ENCODE measurements at regions of chr16 and their contacts with region 1.

Region 1: DNA sequence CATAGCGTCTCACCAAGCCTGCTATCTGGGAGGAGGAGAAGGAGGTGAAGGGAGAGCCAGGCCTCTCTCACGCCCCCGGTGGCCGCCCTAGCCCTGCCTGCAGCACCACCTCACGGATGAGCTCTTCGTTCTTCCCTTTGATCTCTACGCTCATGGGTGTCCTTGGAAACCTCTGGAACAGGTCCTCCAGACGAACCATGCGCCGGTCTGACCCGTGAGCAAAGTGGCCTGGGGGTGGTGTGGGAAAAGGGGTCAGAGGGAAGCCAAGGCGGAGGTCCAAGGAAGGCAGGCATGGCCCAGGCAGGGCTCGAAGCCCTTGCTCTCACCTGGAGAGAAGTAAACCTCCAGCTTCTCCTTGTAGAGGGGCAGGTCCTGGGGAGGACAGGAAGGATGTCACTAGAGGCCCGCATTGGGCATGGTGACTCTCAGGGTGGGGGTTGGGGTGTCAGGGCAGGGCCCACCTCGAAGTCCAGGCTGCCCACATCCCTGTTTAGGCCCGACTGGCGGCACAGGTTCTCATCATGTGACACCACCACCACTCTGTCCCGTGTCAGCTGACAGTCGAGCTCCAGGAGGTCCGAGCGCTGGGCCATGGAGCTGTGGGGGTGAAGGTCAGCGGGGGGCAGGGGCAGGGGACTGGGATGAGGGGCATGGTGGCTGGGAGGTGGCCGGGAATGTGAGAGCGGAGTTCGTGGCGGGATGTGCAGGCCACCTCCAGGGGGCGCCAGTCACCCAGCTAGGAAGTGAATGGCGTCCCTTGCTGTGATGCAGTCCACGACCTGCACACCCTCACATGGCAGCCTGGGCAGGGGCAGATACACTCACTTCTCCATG is 923 bp downstream of the GDPD3 start:
- H3K4me3 ChIP-seq: no peak overlapping the region
- H3K27ac ChIP-seq: no peak overlapping the region
- H3K4me1 ChIP-seq: no peaks in the 10 kb centered on the region
- CTCF ChIP-seq: peak; percentile 84

Region 2: GRCh38 chr16:29961479-29962343 is 150.7 kb before region 1 on chr16 and contains the start of gene TMEM219:
- CTCF ChIA-PET with region 1: no interaction called
- POLR2A ChIA-PET with region 1: no interaction called
- H3K4me3 ChIP-seq: peak within 1 kb of the TSS; percentile 57
- H3K27ac ChIP-seq: peak within 1 kb of the TSS; percentile 44; the same call in 1 of the 2 replicates
- H3K4me1 ChIP-seq: 0 out of 2 replicates have a peak, but pooled peaks cover 3% of the 10 kb centered on the region
- CTCF ChIP-seq: peak; percentile 94

Region 3: DNA sequence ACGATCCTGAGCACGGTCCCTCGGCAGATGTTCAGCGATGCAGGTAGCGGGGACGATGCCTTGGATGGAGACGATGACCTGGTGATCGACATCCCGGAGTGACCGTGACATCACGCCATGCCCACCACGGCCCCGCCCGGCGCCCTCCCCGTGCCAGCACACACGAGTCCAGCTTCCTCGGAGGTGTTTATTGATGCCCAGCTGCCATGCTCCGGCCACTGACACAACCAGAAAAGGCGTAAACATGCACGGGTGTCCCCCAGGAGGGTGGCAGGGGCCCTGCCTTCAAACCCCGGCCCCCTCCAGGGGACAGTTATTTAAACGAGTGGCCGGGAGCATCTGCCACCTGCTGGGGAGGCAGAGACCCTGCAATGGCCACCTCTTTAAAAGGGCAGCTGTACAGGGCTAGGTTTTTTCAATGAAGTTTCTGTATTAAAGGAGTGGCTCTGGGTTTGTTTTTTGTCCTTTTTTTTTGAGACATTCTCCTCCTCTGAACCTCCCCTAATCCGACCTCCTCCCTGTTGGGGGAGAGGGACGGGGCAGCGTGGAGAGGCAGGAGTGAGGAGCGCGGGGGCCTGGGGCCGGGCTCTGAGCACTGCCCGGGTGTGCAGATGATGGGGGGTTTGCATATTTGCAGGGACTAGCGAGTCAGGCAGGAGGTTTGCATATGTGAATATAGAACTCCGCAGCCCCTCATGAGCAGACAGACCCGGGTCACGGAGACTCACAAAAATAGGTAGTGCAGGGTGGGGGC is 106.9 kb before region 1 on chr16:
- CTCF ChIA-PET with region 1: no interaction called
- POLR2A ChIA-PET with region 1: no interaction called
- H3K4me3 ChIP-seq: no peak overlapping the region
- H3K27ac ChIP-seq: no peak overlapping the region
- H3K4me1 ChIP-seq: no peaks in the 10 kb centered on the region
- CTCF ChIP-seq: peak; percentile 60; the same call in 1 of the 2 replicates

Region 4: GRCh38 chr16:30082545-30083090 is 29.8 kb before region 1 on chr16:
- CTCF ChIA-PET with region 1: no interaction called
- POLR2A ChIA-PET with region 1: no interaction called
- H3K4me3 ChIP-seq: no peak overlapping the region
- H3K27ac ChIP-seq: no peak overlapping the region
- H3K4me1 ChIP-seq: no peaks in the 10 kb centered on the region
- CTCF ChIP-seq: peak; percentile 28; the same call in 1 of the 2 replicates

Region 5: DNA sequence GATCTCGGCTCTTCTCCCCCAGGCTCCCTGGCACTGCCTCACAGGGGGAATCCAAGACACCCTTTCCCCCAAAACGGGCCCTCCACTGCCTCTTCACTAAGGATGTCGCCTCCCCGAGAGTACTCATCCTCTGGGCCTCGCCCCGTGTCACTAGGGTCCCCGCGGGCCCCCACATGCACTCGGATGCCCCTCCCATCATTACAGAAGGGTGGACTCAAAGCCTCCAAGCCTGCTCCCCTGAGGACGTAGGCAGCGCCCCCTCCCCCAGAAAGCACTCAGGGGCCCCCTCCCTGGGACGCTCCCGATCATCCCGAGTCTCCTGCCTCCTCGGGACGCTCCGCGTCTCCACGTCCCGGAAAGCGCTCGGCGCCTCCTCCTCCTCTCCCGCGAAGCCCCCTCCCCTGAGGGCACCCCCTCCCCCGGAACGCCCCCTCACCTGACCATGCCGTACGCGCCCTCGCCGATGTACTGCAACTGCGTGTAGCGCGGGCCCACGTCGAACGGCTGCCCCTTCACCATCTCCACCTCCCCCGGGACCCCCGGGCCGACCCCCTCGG is 10.3 kb after region 1 on chr16:
- CTCF ChIA-PET with region 1: interaction called, 20 read pairs
- POLR2A ChIA-PET with region 1: no interaction called
- H3K4me3 ChIP-seq: peak overlapping the region; percentile 75
- H3K27ac ChIP-seq: peak overlapping the region; percentile 51; the same call in 1 of the 2 replicates
- H3K4me1 ChIP-seq: no peaks in the 10 kb centered on the region; the same call in 1 of the 2 replicates
- CTCF ChIP-seq: peak; percentile 21; the same call in 1 of the 2 replicates